ENCODE measurements at regions of chr3 and their contacts with region 1.

Region 1: GRCh38 chr3:177934001-177934891 is 602.0 kb upstream of the KCNMB2 start:
- DNase-seq: peak in 4 of 7 donors; percentile 30 to 43 (median 32)
- H3K4me3 ChIP-seq: no peak overlapping the region
- H3K27ac ChIP-seq: peak overlapping the region in 1 of 5 donors; percentile 64
- H3K4me1 ChIP-seq: peaks cover 16 to 47% of the 10 kb centered on the region in 2 donors
- H3K27me3 ChIP-seq: no peaks in the 10 kb centered on the region
- CTCF ChIP-seq: no peak
- POLR2A ChIP-seq: no peak

Region 2: GRCh38 chr3:178060407-178060806 is 126.2 kb after region 1 on chr3:
- intact Hi-C with region 1: loop called in 1 of 2 experiments (anchors 10 kb)
- DNase-seq: peak; percentile 50 to 85 (median 63)
- H3K4me3 ChIP-seq: peak overlapping the region in 1 of 4 donors; percentile 45
- H3K27ac ChIP-seq: peak overlapping the region; percentile 51 to 77 (median 71)
- H3K4me1 ChIP-seq: peaks cover 21 to 26% of the 10 kb centered on the region in 2 donors
- H3K27me3 ChIP-seq: no peaks in the 10 kb centered on the region
- CTCF ChIP-seq: no peak
- POLR2A ChIP-seq: no peak

Measured in adrenal gland (tissue), 19 donors.